Lower lobe of right lung (tissue), 2 donors: ENCODE measurements at regions of chr2 and their contacts with region 1.

Region 1: DNA sequence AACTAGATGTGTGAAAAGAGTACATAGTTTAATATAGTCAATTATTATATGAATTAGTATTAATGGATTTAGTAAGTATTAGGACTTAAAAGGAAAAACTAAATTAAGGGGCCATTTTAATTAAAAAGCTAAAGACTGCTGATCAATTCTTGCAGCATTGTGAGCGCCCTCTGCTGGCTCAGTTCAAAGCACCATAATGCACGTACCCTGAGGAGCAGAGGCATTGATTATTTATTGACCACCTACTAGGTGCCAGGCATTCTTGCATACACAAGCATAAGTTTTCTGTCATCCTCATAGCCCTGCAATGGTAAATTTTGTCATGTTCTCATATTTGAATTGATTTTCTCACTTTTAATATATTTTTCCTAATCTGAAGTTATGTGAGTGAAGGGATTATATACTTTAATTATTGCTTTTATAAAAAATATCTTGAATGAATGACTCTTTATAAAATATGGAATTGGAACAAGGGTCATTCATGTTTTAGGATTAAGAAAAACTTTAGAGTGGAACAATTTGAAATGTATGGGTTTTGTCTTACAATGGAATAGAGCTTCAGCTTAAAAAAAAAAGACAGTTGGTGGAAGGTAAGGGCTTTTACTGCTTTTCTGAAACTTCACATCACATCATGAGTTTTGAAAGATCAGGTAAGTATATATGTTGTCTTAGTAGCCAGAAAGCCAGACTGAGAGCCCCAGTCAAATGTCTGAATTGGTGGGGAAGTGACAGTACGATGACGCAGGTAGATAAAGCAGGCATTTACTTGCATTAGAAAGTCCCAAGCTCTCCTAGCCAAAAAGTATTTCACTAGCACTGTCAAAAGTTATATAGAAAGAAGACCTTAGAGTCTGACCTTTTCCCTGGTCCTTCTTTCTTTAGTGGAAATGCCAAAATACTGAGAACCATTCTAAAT is 9.7 kb downstream of the ITGA4 start:
- DNase-seq: peak; percentile 82
- ATAC-seq: peak; percentile 61 to 66
- H3K4me3 ChIP-seq: no peak overlapping the region
- H3K27ac ChIP-seq: no peak overlapping the region
- H3K4me1 ChIP-seq: peaks cover 4% of the 10 kb centered on the region
- H3K27me3 ChIP-seq: no peaks in the 10 kb centered on the region
- CTCF ChIP-seq: peak; percentile 86

Region 2: GRCh38 chr2:181104512-181105115 is 362.3 kb before region 1 on chr2:
- intact Hi-C with region 1: loop called (anchors 10 kb)
- DNase-seq: no peak
- ATAC-seq: no peak
- H3K4me3 ChIP-seq: no peak overlapping the region
- H3K27ac ChIP-seq: no peak overlapping the region
- H3K4me1 ChIP-seq: no peaks in the 10 kb centered on the region
- H3K27me3 ChIP-seq: no peaks in the 10 kb centered on the region
- CTCF ChIP-seq: peak; percentile 62

Region 3: DNA sequence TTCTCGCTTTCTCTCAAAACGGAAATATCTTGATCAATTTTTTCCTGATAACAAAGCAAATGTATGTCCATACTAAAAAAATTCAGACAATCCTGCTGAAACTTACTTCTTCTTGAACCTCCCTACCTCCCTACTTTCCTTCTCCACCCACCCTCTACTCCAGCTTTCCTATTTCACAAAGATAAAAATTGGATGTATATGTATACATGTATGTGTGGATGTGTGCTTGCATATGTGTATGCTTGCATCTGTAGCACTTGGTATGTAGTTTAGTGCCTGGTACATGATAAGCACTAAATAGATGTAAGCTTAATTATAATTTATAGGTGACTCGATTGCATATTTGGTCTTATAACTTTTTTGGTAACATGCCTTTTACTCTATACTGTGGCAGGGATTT is 177.2 kb before region 1 on chr2:
- intact Hi-C with region 1: no loop called
- DNase-seq: no peak
- ATAC-seq: no peak
- H3K4me3 ChIP-seq: no peak overlapping the region
- H3K27ac ChIP-seq: no peak overlapping the region
- H3K4me1 ChIP-seq: no peaks in the 10 kb centered on the region
- H3K27me3 ChIP-seq: no peaks in the 10 kb centered on the region
- CTCF ChIP-seq: no peak